CD8-positive, alpha-beta memory T cell (primary cell): ENCODE measurements at regions of chr11 and their contacts with region 1.

Region 1: DNA sequence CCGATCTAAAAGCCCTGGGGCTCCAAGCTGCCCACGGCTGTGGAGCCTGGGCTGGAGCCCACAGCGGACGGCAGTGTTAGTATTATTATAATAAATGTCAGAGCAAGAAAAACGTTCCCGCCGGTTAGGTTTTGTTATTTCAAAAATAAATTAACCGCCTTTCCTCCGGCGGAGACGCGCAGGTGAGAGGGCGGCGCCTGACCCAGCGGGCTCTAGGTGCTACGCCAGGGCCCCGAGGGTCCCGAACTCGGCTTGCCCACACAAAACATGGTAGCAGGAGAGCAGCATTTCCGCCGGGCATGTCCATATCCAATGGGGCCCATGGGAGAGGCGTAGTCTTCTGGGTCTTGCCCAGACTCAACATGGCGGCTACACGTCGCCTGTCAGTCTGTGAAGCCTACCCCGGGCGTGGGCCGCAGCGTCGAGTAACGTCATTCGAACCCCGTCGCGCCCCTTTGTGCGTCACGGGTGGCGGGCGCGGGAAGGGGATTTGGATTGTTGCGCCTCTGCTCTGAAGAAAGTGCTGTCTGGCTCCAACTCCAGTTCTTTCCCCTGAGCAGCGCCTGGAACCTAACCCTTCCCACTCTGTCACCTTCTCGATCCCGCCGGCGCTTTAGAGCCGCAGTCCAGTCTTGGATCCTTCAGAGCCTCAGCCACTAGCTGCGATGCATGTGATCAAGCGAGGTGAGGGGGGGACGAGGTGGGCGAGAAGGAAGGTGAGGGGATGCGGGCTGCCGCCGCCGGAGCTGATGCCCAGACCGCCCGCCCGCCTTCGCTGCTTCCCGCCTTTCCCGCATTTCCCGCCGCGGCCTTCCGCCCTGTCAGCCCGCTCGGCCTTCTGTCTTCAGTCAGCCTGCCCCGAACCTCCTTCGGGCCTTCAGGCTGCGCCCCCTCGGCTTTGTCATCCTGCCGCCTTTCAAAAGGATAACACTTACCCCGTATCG is at the start of gene RRM1:
- DNase-seq: peak; percentile 88 to 94 (median 93)
- H3K4me3 ChIP-seq: peak within 1 kb of the TSS; percentile 97
- H3K4me3 Mint-ChIP-seq: peak within 1 kb of the TSS; percentile 95 to 99 (median 97)
- H3K27ac ChIP-seq: peak within 1 kb of the TSS; percentile 92
- H3K27ac Mint-ChIP-seq: peak within 1 kb of the TSS; percentile 97 to 100 (median 98)
- H3K4me1 ChIP-seq: peaks cover 72% of the 10 kb centered on the region
- H3K4me1 Mint-ChIP-seq: peaks cover 68 to 87% (median 87%) of the 10 kb centered on the region in 3 donors
- H3K27me3 ChIP-seq: no peaks in the 10 kb centered on the region
- H3K27me3 Mint-ChIP-seq: peaks cover 0 to 3% of the 10 kb centered on the region in 2 donors
- total RNA-seq, gene RRM1: 198 to 211 TPM

Region 2: GRCh38 chr11:3709977-3710376 is 384.6 kb before region 1 on chr11:
- CTCF ChIA-PET with region 1: no interaction called
- POLR2A ChIA-PET with region 1: interaction called, 10 read pairs
- DNase-seq: no peak
- H3K4me3 ChIP-seq: no peak overlapping the region
- H3K4me3 Mint-ChIP-seq: no peak overlapping the region
- H3K27ac ChIP-seq: no peak overlapping the region
- H3K27ac Mint-ChIP-seq: no peak overlapping the region
- H3K4me1 ChIP-seq: no peaks in the 10 kb centered on the region
- H3K4me1 Mint-ChIP-seq: peaks cover 0 to 5% (median 4%) of the 10 kb centered on the region in 3 donors
- H3K27me3 ChIP-seq: no peaks in the 10 kb centered on the region
- H3K27me3 Mint-ChIP-seq: no peaks in the 10 kb centered on the region